Activated CD4-positive, alpha-beta T cell treated with anti-CD3 and anti-CD28 coated beads for 36 hours (primary cell): ENCODE measurements at regions of chr6 and their contacts with region 1.

Region 1: GRCh38 chr6:41306187-41306854 is 19.8 kb upstream of the TREM1 start:
- DNase-seq: peak; percentile 59
- ATAC-seq: no peak
- H3K4me3 Mint-ChIP-seq: no peak overlapping the region
- H3K27ac Mint-ChIP-seq: no peak overlapping the region
- H3K4me1 Mint-ChIP-seq: peaks cover 9% of the 10 kb centered on the region
- H3K27me3 Mint-ChIP-seq: no peaks in the 10 kb centered on the region

Region 2: GRCh38 chr6:41278699-41279405 is 27.5 kb before region 1 on chr6:
- CTCF ChIA-PET with region 1: interaction called, 19 read pairs
- POLR2A ChIA-PET with region 1: no interaction called
- intact Hi-C with region 1: no loop called
- DNase-seq: peak; percentile 79
- ATAC-seq: peak; percentile 92
- H3K4me3 Mint-ChIP-seq: no peak overlapping the region
- H3K27ac Mint-ChIP-seq: peak overlapping the region; percentile 39
- H3K4me1 Mint-ChIP-seq: peaks cover 11% of the 10 kb centered on the region
- H3K27me3 Mint-ChIP-seq: peaks cover 3% of the 10 kb centered on the region

Region 3: DNA sequence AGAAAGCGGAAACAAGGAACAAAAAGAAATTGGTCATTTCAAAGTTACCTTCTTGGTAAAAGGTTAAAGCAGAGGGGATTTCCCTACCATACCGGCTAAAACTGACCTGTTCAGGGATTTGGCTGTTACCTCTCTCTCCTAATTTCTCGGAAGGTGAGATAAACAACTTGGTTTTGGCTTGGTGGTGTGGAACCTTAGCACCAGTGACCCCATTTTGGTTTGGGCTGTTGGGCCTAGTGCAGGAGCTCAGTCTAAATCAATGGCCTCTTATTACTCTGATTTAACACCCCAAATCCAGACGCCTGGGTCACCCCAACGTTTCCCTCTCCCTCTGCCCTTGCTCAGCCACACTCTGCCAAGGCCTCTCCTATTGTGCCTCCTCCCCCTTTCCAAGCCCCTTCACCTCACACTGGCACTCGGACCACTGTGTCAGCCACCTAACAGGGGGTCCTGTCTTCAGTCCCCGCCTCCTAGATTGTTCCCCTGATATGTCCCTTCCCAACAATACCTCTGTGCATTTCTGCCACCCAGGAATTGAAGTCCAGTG is 37.4 kb after region 1 on chr6:
- CTCF ChIA-PET with region 1: no interaction called
- POLR2A ChIA-PET with region 1: no interaction called
- intact Hi-C with region 1: no loop called
- DNase-seq: no peak
- ATAC-seq: no peak
- H3K4me3 Mint-ChIP-seq: no peak overlapping the region
- H3K27ac Mint-ChIP-seq: no peak overlapping the region
- H3K4me1 Mint-ChIP-seq: peaks cover 26% of the 10 kb centered on the region
- H3K27me3 Mint-ChIP-seq: no peaks in the 10 kb centered on the region